ENCODE measurements at regions of chr10 and their contacts with region 1.

Region 1: GRCh38 chr10:100433253-100434240 is 29.3 kb upstream of the WNT8B start:
- DNase-seq: peak; percentile 87 to 98
- ATAC-seq: peak; percentile 91

Region 2: GRCh38 chr10:100338434-100339036 is 95.0 kb before region 1 on chr10:
- intact Hi-C with region 1: loop called (anchors 2 to 5 kb)
- DNase-seq: peak; percentile 45 to 84
- ATAC-seq: peak; percentile 68

Region 3: DNA sequence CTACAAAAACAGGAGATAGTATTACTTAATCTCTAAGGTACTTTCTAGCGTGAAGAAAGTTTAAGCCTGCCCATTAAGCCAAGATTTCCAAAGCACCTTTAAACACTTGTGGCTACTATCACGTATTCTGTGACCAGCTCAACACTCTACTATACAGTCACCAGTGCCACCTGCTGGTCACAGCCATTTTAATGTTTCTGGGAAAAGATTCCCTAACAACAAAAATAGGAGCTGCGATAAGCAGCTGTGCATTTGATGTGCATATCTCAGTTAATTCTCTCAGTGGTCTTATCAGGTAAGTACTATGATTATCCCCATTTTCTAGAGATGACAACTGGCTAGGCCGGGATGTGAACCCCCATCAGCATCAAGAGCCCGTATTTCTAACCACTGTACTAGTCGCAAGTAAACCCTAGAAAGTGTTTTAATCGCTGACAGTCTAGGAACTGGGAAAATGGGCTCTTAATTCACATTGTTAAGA is 85.3 kb after region 1 on chr10:
- intact Hi-C with region 1: loop called in 1 of 2 experiments (anchors 10 kb)
- DNase-seq: peak; percentile 44 to 83
- ATAC-seq: peak; percentile 81

Measured in left colon (tissue), 2 donors.